ENCODE measurements at regions of chr5 and their contacts with region 1.

Region 1: GRCh38 chr5:150656191-150657132 is 4.6 kb upstream of the MYOZ3 start:
- DNase-seq: peak; percentile 66 to 73
- H3K4me3 ChIP-seq: peak overlapping the region in 2 of 3 donors; percentile 32 to 44
- H3K27ac ChIP-seq: peak overlapping the region; percentile 19 to 73 (median 29)
- H3K4me1 ChIP-seq: peaks cover 3 to 21% of the 10 kb centered on the region in 2 donors
- H3K27me3 ChIP-seq: no peaks in the 10 kb centered on the region
- CTCF ChIP-seq: peak in 4 of 6 experiments; percentile 14 to 95 (median 70)
- POLR2A ChIP-seq: no peak

Region 2: GRCh38 chr5:150458819-150459557 is 197.5 kb before region 1 on chr5:
- intact Hi-C with region 1: loop called (anchors 5 kb)
- DNase-seq: peak; percentile 78 to 81
- H3K4me3 ChIP-seq: no peak overlapping the region
- H3K27ac ChIP-seq: peak overlapping the region in 1 of 3 donors; percentile 5
- H3K4me1 ChIP-seq: peaks cover 0 to 15% of the 10 kb centered on the region in 2 donors
- H3K27me3 ChIP-seq: no peaks in the 10 kb centered on the region
- CTCF ChIP-seq: peak; percentile 55 to 88 (median 84)
- POLR2A ChIP-seq: no peak

Region 3: GRCh38 chr5:150560401-150561193 is 95.9 kb before region 1 on chr5:
- intact Hi-C with region 1: loop called (anchors 5 kb)
- DNase-seq: peak; percentile 87 to 91
- H3K4me3 ChIP-seq: no peak overlapping the region
- H3K27ac ChIP-seq: no peak overlapping the region
- H3K4me1 ChIP-seq: no peaks in the 10 kb centered on the region
- H3K27me3 ChIP-seq: no peaks in the 10 kb centered on the region
- CTCF ChIP-seq: peak; percentile 79 to 95 (median 90)
- POLR2A ChIP-seq: no peak

Region 4: GRCh38 chr5:150573867-150574817 is 82.3 kb before region 1 on chr5:
- intact Hi-C with region 1: loop called (anchors 5 kb)
- DNase-seq: no peak
- H3K4me3 ChIP-seq: no peak overlapping the region
- H3K27ac ChIP-seq: no peak overlapping the region
- H3K4me1 ChIP-seq: no peaks in the 10 kb centered on the region
- H3K27me3 ChIP-seq: no peaks in the 10 kb centered on the region
- CTCF ChIP-seq: no peak
- POLR2A ChIP-seq: no peak

Measured in thyroid gland (tissue), 4 donors.